Activated CD4-positive, alpha-beta memory T cell treated with anti-CD3 and anti-CD28 coated beads, Interleukin-2, amount 10 ng/mL, durations not matched to agents 7 days and 5 days (primary cell): ENCODE measurements at regions of chr2 and their contacts with region 1.

Region 1: GRCh38 chr2:157420771-157421323 is 23.0 kb downstream of the CYTIP start:
- DNase-seq: no peak
- H3K4me3 Mint-ChIP-seq: no peak overlapping the region
- H3K27ac Mint-ChIP-seq: peak overlapping the region; percentile 88
- H3K4me1 Mint-ChIP-seq: peaks cover 77% of the 10 kb centered on the region
- H3K27me3 Mint-ChIP-seq: no peaks in the 10 kb centered on the region

Region 2: DNA sequence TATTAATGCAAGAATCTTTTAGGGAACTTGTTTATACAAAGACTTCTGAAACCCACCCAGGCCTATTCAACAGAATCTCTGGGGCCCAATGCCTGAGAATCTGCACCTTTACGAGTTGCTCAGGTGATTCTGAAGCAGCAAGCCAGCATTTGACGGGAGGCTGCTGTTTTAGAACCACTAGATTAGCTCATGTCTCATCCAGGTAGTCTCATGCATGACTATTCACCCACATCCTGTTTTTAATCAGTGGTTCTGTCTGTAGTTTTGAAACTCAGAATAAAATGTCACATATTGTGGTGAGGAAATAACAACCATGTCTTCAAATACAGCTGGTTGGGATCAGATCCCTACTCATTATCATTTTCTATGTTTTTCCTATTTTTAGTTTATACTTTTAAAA is 16.5 kb before region 1 on chr2:
- CTCF ChIA-PET with region 1: interaction called, 13 read pairs
- POLR2A ChIA-PET with region 1: interaction called, 93 read pairs
- DNase-seq: peak; percentile 67
- H3K4me3 Mint-ChIP-seq: peak overlapping the region; percentile 50
- H3K27ac Mint-ChIP-seq: peak overlapping the region; percentile 87
- H3K4me1 Mint-ChIP-seq: peaks cover 64% of the 10 kb centered on the region
- H3K27me3 Mint-ChIP-seq: no peaks in the 10 kb centered on the region

Region 3: DNA sequence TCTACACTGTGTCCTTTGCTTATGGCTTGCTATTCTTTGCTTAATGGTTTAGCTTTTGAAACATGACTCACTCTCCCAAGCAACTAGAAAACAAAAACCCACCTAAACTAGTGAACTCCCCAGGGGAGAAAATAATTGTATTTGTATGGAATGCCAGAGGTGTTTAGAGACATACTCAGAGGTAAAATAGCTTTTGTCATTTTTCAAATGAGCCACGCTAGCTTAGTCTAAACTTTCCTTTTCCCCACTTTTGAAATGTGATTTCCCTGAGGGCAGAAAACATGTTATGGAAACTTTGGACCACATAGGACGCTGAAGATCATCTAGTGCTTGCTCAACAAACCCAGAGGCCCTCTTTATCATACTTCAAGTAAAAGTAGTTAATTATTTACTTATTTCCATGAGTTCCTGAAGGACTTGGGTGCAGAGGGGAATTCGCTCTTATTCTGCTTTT is 39.6 kb after region 1 on chr2:
- CTCF ChIA-PET with region 1: no interaction called
- POLR2A ChIA-PET with region 1: interaction called, 10 read pairs
- DNase-seq: no peak
- H3K4me3 Mint-ChIP-seq: no peak overlapping the region
- H3K27ac Mint-ChIP-seq: peak overlapping the region; percentile 23
- H3K4me1 Mint-ChIP-seq: peaks cover 88% of the 10 kb centered on the region
- H3K27me3 Mint-ChIP-seq: no peaks in the 10 kb centered on the region

Region 4: GRCh38 chr2:157468931-157469708 is 48.3 kb after region 1 on chr2:
- CTCF ChIA-PET with region 1: interaction called, 3 read pairs
- POLR2A ChIA-PET with region 1: interaction called, 13 read pairs
- DNase-seq: no peak
- H3K4me3 Mint-ChIP-seq: peak overlapping the region; percentile 72
- H3K27ac Mint-ChIP-seq: peak overlapping the region; percentile 99
- H3K4me1 Mint-ChIP-seq: peaks cover 92% of the 10 kb centered on the region
- H3K27me3 Mint-ChIP-seq: no peaks in the 10 kb centered on the region